GM12878 (cell line): ENCODE measurements at regions of chr6 and their contacts with region 1.

Region 1: GRCh38 chr6:125097186-125097585 is 56.4 kb upstream of the TPD52L1 start:
- DNase-seq: no peak
- ATAC-seq: no peak
- H3K4me3 ChIP-seq: no peak overlapping the region
- H3K27ac ChIP-seq: no peak overlapping the region
- H3K4me1 ChIP-seq: no peaks in the 10 kb centered on the region
- H3K27me3 ChIP-seq: peaks cover 1 to 3% of the 10 kb centered on the region in 2 experiments
- CTCF ChIP-seq: no peak
- EP300 ChIP-seq: no peak
- POLR2A ChIP-seq: no peak
- RAD21 ChIP-seq: no peak

Region 2: DNA sequence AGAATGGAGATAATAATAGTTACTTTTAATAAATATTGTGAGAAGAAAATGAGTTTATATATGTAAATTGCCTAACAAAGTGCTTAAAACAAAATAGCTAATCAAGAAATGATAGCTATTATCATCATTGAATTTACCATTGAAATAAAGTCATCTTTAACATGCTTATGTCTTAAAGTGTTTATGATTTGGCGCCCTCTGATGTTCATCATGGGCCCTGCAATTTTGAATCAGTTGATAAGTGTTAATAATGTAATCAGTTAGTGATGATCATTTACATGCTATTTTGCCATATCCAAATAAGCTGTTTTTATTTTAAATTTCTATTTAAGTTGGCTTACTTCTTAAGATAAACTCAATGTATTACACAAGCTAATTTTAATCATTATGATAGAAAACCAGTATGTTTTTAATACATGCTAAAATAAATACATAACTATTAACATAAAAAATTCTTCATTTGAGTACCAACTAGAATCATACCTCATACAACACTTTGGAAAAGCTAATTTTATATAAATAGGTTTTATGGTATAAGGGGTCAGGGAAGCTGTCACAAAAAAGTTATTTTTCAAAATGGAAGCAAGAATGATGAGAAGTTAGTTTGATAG is 17.2 kb after region 1 on chr6:
- CTCF ChIA-PET with region 1: interaction called, 10 read pairs
- POLR2A ChIA-PET with region 1: no interaction called
- RAD21 ChIA-PET with region 1: no interaction called
- SMC1A ChIA-PET with region 1: interaction called, 5 read pairs
- in situ Hi-C with region 1: no loop called
- intact Hi-C with region 1: no loop called
- DNase-seq: no peak
- ATAC-seq: peak; percentile 64; the same call in 2 of the 3 replicates
- H3K4me3 ChIP-seq: no peak overlapping the region
- H3K27ac ChIP-seq: no peak overlapping the region
- H3K4me1 ChIP-seq: no peaks in the 10 kb centered on the region
- H3K27me3 ChIP-seq: no peaks in the 10 kb centered on the region; a peak in 1 of 4 replicates
- CTCF ChIP-seq: peak; percentile 54 to 68 (median 62)
- EP300 ChIP-seq: no peak
- POLR2A ChIP-seq: no peak
- RAD21 ChIP-seq: peak; percentile 53

Region 3: GRCh38 chr6:125220712-125221111 is 123.5 kb after region 1 on chr6:
- CTCF ChIA-PET with region 1: no interaction called
- POLR2A ChIA-PET with region 1: no interaction called
- RAD21 ChIA-PET with region 1: no interaction called
- SMC1A ChIA-PET with region 1: no interaction called
- in situ Hi-C with region 1: no loop called
- intact Hi-C with region 1: no loop called
- DNase-seq: no peak
- ATAC-seq: no peak
- H3K4me3 ChIP-seq: no peak overlapping the region
- H3K27ac ChIP-seq: no peak overlapping the region
- H3K4me1 ChIP-seq: no peaks in the 10 kb centered on the region
- H3K27me3 ChIP-seq: no peaks in the 10 kb centered on the region
- CTCF ChIP-seq: no peak
- EP300 ChIP-seq: no peak
- POLR2A ChIP-seq: no peak
- RAD21 ChIP-seq: no peak

Region 4: DNA sequence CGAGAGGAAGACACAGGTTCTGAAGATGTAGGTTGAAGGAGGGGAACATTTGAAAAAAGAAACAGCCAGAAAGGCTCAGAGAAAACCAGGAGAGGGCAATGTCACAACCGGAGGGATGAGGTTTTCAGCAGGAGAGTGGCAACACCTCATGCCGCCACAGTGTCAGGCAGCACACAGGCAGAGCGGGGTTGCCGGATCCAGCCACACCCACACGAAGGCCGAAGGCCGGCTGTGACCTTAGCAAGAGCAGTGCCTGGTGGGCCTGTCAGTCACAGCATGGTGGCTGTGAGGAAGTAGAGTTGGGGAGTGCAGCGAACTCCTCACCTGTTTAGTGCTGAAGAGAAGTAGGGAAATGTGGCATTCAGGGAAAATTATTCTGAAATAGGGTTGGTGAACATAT is 190.5 kb after region 1 on chr6:
- CTCF ChIA-PET with region 1: no interaction called
- POLR2A ChIA-PET with region 1: no interaction called
- RAD21 ChIA-PET with region 1: no interaction called
- SMC1A ChIA-PET with region 1: no interaction called
- in situ Hi-C with region 1: no loop called
- intact Hi-C with region 1: no loop called
- DNase-seq: no peak
- ATAC-seq: no peak
- H3K4me3 ChIP-seq: no peak overlapping the region
- H3K27ac ChIP-seq: no peak overlapping the region
- H3K4me1 ChIP-seq: no peaks in the 10 kb centered on the region
- H3K27me3 ChIP-seq: no peaks in the 10 kb centered on the region
- CTCF ChIP-seq: no peak
- EP300 ChIP-seq: no peak
- POLR2A ChIP-seq: no peak
- RAD21 ChIP-seq: no peak

Region 5: DNA sequence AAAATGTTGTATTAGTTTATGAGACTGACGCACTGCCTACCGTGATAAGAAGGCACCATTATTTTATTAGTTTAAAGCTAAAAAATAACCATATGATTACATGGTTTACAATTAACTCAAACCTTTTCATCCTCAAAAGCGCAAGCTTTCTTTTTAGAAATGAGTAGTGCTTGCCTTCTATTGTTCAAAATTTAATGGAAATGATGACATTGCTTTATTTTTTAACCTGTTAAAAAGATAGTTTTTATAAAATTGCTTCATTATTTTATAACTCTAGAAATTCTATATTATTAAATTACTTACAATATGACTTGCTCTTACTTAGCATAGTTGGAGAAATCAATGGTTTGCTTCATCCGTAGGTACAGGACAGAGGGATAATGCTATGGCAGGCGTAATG is 283.3 kb after region 1 on chr6:
- CTCF ChIA-PET with region 1: no interaction called
- POLR2A ChIA-PET with region 1: no interaction called
- RAD21 ChIA-PET with region 1: no interaction called
- SMC1A ChIA-PET with region 1: no interaction called
- in situ Hi-C with region 1: no loop called
- intact Hi-C with region 1: no loop called
- DNase-seq: no peak
- ATAC-seq: no peak
- H3K4me3 ChIP-seq: no peak overlapping the region
- H3K27ac ChIP-seq: no peak overlapping the region
- H3K4me1 ChIP-seq: no peaks in the 10 kb centered on the region
- H3K27me3 ChIP-seq: no peaks in the 10 kb centered on the region
- CTCF ChIP-seq: no peak
- EP300 ChIP-seq: no peak
- POLR2A ChIP-seq: no peak
- RAD21 ChIP-seq: no peak